ENCODE measurements at regions of chr17 and their contacts with region 1.

Region 1: GRCh38 chr17:45873728-45874127 is 20.6 kb upstream of the MAPT start:
- DNase-seq: peak in 7 of 35 experiments; percentile 9 to 52 (median 17)
- ATAC-seq: peak; percentile 80 to 92 (median 88)
- H3K4me3 ChIP-seq: no peak overlapping the region
- H3K4me3 Mint-ChIP-seq: peak overlapping the region; percentile 10 to 64 (median 59)
- H3K27ac ChIP-seq: peak overlapping the region; percentile 47
- H3K27ac Mint-ChIP-seq: peak overlapping the region; percentile 88
- H3K4me1 ChIP-seq: peaks cover 0 to 4% of the 10 kb centered on the region in 2 experiments
- H3K4me1 Mint-ChIP-seq: peaks cover 5 to 12% (median 9%) of the 10 kb centered on the region in 3 donors
- H3K27me3 ChIP-seq: peaks cover 0 to 3% of the 10 kb centered on the region in 2 experiments
- H3K27me3 Mint-ChIP-seq: no peaks in the 10 kb centered on the region

Region 2: DNA sequence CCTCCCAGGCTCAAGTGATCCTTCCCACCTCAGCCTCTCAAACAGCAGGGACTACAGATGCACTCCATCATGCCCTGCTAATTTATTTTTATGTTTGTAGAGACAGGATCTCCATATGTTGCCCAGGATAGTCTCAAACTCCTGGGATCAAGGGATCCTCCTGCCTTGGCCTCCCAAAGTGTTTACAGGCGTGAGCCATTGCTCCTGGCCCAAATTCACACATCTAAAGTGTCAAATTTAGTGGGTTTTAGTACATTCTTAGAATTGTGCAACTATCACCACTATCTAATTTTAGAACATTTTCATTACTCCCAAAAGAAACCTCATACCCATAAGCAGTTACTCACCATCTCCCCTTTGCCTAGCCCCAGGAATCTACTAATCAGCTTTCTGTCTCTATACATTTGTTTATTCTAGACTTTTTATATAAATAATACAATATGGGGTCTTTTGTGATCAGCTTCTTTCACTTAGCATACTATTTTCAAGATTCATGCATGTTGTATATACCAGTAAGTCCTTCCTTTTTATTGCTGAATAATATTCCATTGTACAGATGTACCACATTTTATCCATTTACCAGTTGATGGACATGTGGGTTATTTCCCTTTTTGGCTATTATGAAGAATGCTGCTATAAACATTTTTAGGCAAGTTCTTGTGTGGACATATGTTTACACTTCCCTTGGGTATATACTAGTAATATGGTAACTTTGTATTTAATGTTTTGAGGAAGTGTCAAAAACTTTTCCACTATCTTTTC is 1459.2 kb before region 1 on chr17:
- CTCF ChIA-PET with region 1: no interaction called
- POLR2A ChIA-PET with region 1: interaction called in 1 of 2 experiments, 12 read pairs
- DNase-seq: no peak
- ATAC-seq: no peak
- H3K4me3 ChIP-seq: no peak overlapping the region
- H3K4me3 Mint-ChIP-seq: no peak overlapping the region
- H3K27ac ChIP-seq: no peak overlapping the region
- H3K27ac Mint-ChIP-seq: no peak overlapping the region
- H3K4me1 ChIP-seq: no peaks in the 10 kb centered on the region
- H3K4me1 Mint-ChIP-seq: no peaks in the 10 kb centered on the region
- H3K27me3 ChIP-seq: no peaks in the 10 kb centered on the region
- H3K27me3 Mint-ChIP-seq: no peaks in the 10 kb centered on the region

Region 3: DNA sequence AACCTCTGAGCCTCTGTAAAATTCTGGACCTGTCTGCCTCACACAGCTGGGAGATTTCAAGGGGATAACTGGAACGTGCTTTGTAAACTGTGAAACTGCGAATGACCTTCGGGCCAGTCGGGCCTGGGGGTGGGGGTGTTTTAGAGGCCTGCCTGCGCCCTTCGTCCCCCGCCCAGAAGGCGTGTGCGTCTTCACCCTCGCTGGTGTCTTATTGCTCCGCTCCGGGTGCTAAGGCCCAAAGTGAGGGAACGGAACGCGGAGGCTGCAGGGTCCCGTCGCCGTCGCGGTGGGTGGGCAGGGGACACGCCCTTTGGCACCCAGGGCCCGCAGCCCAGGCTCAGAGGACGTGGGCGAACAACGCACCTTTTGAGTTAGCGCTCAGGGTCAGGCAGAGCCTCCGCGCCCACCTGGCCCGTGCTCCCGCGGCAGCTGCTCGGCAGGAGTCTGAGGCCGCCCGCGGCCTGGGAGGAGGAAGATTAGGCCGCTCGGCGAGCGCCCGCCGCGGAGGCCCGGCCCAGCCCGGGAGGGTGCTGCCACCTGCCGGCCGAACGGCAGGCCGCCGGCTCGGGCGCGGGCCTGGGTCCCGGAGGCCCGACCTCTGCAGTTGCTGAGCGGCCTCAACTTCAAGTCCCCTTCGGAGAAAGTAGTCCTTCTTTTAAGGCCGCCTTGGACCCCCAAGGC is 852.0 kb before region 1 on chr17:
- CTCF ChIA-PET with region 1: no interaction called
- POLR2A ChIA-PET with region 1: no interaction called
- DNase-seq: peak in 34 of 35 experiments; percentile 18 to 81 (median 54)
- ATAC-seq: peak; percentile 73 to 82 (median 78)
- H3K4me3 ChIP-seq: peak overlapping the region; percentile 41 to 63
- H3K4me3 Mint-ChIP-seq: peak overlapping the region; percentile 26 to 73 (median 73)
- H3K27ac ChIP-seq: no peak overlapping the region
- H3K27ac Mint-ChIP-seq: no peak overlapping the region
- H3K4me1 ChIP-seq: peaks cover 3 to 33% of the 10 kb centered on the region in 2 experiments
- H3K4me1 Mint-ChIP-seq: peaks cover 20 to 30% (median 24%) of the 10 kb centered on the region in 3 donors
- H3K27me3 ChIP-seq: peaks cover 7 to 55% of the 10 kb centered on the region in 2 experiments
- H3K27me3 Mint-ChIP-seq: peaks cover 31 to 33% of the 10 kb centered on the region in 2 donors

Measured in T-cell (primary cell).